Left ventricle myocardium superior (tissue), 1 donor: ENCODE measurements at regions of chr18 and their contacts with region 1.

Region 1: GRCh38 chr18:47595815-47596496 is 334.5 kb downstream of the SMAD2 start:
- DNase-seq: no peak
- ATAC-seq: no peak

Region 2: DNA sequence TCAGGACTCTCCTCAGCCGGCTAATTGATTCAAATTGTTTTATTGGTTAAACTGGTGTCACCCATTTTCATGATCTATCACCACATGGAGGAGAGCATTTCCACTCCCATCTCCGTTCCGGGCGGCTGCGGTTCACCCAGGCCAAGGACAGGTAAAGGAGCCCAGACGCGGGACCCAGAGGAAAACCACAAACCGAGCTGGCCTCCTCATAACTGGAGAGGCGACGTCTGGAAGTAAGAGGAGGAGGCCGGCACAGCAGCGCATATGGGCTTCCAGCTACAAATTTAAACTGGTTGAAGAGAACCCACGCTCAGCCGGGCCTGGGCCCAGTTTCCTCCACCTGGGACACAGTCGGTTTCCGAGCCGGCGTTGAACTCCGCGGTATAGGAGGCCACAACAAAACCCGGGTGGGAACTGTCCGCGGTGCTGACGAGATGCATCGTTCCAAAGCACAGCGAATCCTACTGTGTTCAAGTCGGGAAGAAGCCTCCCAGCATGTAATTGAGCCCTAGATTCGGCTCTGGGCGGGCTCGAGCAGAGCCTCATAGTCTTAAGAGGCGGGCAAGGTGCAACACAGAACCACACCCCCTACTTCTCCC is 341.5 kb before region 1 on chr18:
- intact Hi-C with region 1: loop called (anchors 10 kb)
- DNase-seq: peak; percentile 65
- ATAC-seq: peak; percentile 52

Region 3: DNA sequence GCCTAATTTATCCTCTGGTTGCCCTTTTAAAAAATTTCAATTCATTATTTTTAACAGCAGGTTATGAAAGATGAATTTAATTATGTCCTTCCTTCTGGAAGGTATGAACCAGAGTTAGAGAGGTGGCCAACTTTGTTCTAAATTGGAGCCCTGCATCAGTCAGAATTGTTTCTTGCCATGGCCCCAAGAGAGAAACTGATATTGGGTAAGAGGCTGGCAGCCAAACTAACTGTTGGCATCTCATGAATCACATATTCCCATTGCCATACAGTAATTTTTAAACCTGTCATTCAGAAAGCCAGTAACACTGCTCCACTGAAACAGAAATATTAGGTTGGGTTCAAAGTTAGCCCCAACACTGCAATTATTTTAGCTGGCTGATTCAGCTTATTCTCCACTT is 267.1 kb after region 1 on chr18:
- intact Hi-C with region 1: no loop called
- DNase-seq: no peak
- ATAC-seq: peak; percentile 98